Heart left ventricle (tissue), 16 donors: ENCODE measurements at regions of chr10 and their contacts with region 1.

Region 1: DNA sequence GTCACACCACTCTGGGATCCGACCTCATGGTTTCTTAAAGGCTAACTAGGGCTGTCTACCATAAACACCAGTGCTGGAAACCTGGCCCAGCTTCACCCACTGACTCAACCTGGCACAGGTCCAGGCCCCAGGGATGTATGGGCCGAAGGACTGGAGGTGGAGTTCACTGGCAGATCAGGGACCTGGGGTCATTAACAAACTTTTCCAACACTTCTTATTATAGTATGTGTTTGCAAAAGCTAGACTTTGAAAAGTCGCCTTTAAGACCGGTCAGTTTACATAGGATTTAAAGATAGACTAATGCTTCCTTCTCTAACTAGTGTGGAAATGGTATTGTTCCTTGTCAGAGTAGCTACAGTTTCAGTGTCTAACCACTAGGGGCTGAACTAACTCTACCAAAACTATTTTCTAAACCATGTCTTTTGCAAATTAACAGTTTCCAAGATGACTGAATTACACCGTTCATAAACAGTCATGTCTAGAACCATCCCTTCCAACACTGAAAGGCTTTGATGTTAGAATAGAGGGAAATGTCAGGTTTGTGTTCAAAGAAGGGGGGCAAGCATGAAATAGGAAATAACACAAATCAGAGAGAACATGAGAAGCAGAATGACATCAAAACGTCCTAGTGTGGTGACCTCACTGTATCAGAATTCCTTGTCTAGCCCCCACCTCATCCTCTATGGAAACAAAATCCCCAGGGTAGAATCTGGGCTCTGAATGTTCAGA is 29.7 kb downstream of the STN1 start:
- DNase-seq: peak; percentile 62 to 87 (median 71)
- ATAC-seq: peak; percentile 55 to 78 (median 68)
- H3K4me3 ChIP-seq: no peak overlapping the region
- H3K27ac ChIP-seq: peak overlapping the region in 9 of 12 donors; percentile 17 to 65 (median 54)
- H3K4me1 ChIP-seq: peaks cover 0 to 42% (median 26%) of the 10 kb centered on the region in 12 donors
- H3K27me3 ChIP-seq: no peaks in the 10 kb centered on the region
- CTCF ChIP-seq: peak; percentile 69 to 92 (median 84)
- POLR2A ChIP-seq: no peak

Region 2: DNA sequence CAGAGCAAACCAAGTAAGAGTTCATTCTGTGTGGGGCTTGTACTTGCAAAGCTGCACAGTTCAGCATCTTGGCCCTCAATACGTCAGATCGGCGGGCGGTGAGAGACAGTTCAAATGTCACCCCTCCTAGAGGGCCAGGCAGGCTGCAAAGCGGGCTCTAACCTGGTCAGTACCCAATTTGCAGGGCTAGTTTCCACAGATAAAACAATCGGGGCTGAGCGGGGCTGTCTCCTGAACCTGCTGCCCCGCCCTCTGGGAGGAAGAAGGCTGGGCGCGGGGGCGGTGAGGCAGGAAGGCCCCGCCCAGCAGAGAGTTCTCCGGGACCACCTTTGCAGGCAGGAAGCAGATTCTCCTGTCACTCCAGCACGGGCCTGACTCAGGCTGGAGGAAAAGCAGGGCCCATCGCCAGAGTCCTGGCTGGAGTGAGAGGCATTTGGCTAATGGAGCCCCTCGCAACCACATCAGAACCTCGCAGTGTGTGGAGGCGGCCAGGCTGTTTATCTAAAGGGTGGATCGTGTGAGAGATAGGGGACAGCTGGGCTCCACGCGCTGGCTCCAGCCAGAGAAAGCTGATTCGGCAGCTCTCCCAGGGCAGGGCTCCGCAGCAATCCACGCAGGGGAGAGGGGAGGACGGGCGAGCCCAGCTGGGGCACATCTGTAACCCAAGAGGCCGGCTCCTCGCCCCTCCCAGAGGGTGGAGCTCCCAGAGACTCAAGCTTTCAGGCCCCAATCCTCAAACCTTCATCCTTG is 116.0 kb before region 1 on chr10:
- intact Hi-C with region 1: no loop called
- DNase-seq: peak; percentile 86 to 92 (median 89)
- ATAC-seq: peak; percentile 83 to 93 (median 90)
- H3K4me3 ChIP-seq: peak overlapping the region in 10 of 12 donors; percentile 22 to 59 (median 44)
- H3K27ac ChIP-seq: peak overlapping the region; percentile 56 to 89 (median 78)
- H3K4me1 ChIP-seq: peaks cover 0 to 40% (median 18%) of the 10 kb centered on the region in 12 donors
- H3K27me3 ChIP-seq: no peaks in the 10 kb centered on the region
- CTCF ChIP-seq: no peak
- POLR2A ChIP-seq: peak in 1 of 2 donors; percentile 23

Region 3: GRCh38 chr10:103820101-103821062 is 67.9 kb before region 1 on chr10:
- intact Hi-C with region 1: no loop called
- DNase-seq: peak; percentile 83 to 91 (median 86)
- ATAC-seq: peak; percentile 60 to 91 (median 81)
- H3K4me3 ChIP-seq: peak overlapping the region in 4 of 12 donors; percentile 2 to 26 (median 10)
- H3K27ac ChIP-seq: peak overlapping the region in 9 of 12 donors; percentile 2 to 60 (median 54)
- H3K4me1 ChIP-seq: peaks cover 0 to 68% (median 38%) of the 10 kb centered on the region in 12 donors
- H3K27me3 ChIP-seq: no peaks in the 10 kb centered on the region
- CTCF ChIP-seq: no peak
- POLR2A ChIP-seq: no peak

Region 4: GRCh38 chr10:103918053-103918846 is 30.0 kb after region 1 on chr10 and contains the start of gene STN1:
- intact Hi-C with region 1: loop called in 1 of 10 experiments (anchors 1 kb)
- DNase-seq: peak; percentile 98 to 99 (median 99)
- ATAC-seq: peak; percentile 98
- H3K4me3 ChIP-seq: peak within 1 kb of the TSS; percentile 27 to 97 (median 74)
- H3K27ac ChIP-seq: peak within 1 kb of the TSS; percentile 90 to 100 (median 96)
- H3K4me1 ChIP-seq: peaks cover 0 to 44% (median 29%) of the 10 kb centered on the region in 12 donors
- H3K27me3 ChIP-seq: no peaks in the 10 kb centered on the region
- CTCF ChIP-seq: peak in 4 of 12 donors; percentile 11 to 19 (median 14)
- POLR2A ChIP-seq: peak; percentile 85 to 97
- total RNA-seq, gene STN1: 28.6 to 53.1 (median 32.7) TPM

Region 5: DNA sequence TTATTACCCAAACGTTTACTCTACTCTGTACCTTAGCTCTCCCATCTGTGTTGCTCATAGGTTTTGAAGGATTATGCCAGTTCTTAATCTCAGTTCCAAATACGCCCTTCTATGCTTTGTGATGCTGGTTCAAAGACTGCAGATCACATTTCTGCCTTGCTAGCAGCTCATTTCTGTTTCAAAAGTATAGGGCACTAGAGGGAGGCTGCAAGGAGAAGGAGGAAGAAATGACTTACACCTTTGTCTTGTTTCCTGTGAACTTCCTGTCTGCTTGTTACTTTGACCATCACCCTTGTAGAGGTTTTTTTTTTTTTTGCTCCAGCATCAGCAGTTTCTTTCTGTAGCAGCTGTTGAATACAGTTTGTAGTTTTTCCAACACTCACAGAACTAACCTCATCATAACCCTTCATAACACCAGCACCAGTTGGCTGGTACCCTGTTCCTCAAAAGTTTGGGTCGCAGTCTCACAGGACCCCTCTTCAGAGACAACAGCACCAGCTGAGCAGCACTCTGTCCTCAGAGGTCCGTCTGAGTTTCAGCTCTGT is 95.2 kb after region 1 on chr10:
- intact Hi-C with region 1: loop called in 3 of 10 experiments (anchors 5 kb)
- DNase-seq: no peak
- ATAC-seq: peak in 1 of 4 donors; percentile 23
- H3K4me3 ChIP-seq: no peak overlapping the region
- H3K27ac ChIP-seq: peak overlapping the region in 2 of 12 donors; percentile 20 to 70
- H3K4me1 ChIP-seq: peaks cover 0 to 64% (median 31%) of the 10 kb centered on the region in 12 donors
- H3K27me3 ChIP-seq: no peaks in the 10 kb centered on the region
- CTCF ChIP-seq: no peak
- POLR2A ChIP-seq: no peak

Region 6: DNA sequence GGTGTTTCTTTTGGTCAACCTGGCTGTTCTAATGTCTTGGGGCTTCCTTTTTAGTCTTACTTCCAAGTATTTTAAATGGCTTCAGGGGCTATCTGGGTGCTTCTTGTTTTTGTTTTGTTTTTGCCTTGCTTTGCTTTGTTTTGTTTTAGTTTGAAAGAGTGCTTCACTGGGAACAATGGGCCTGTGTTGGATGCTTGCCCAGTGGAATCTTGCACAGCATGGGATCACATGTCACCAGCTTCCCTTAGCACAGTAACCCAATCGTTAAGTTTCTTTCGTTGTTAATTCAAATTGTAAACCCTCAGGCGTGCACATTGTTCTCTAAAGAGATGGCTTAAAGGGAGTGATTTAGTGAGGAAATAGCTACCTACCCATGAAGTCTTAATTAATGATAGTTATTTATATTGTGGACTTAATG is 188.5 kb after region 1 on chr10:
- intact Hi-C with region 1: loop called in 1 of 10 experiments (anchors 5 kb)
- DNase-seq: peak in 4 of 5 donors; percentile 67 to 81 (median 70)
- ATAC-seq: peak; percentile 67 to 96 (median 80)
- H3K4me3 ChIP-seq: no peak overlapping the region
- H3K27ac ChIP-seq: peak overlapping the region in 8 of 12 donors; percentile 27 to 71 (median 46)
- H3K4me1 ChIP-seq: peaks cover 0 to 19% (median 7%) of the 10 kb centered on the region in 12 donors
- H3K27me3 ChIP-seq: no peaks in the 10 kb centered on the region
- CTCF ChIP-seq: no peak
- POLR2A ChIP-seq: no peak

Region 7: GRCh38 chr10:104209575-104210198 is 321.4 kb after region 1 on chr10:
- intact Hi-C with region 1: loop called (anchors 2 to 10 kb)
- DNase-seq: peak in 2 of 5 donors; percentile 20 to 33
- ATAC-seq: peak in 3 of 4 donors; percentile 49 to 71 (median 68)
- H3K4me3 ChIP-seq: no peak overlapping the region
- H3K27ac ChIP-seq: no peak overlapping the region
- H3K4me1 ChIP-seq: peaks cover 0 to 4% (median 0%) of the 10 kb centered on the region in 12 donors
- H3K27me3 ChIP-seq: no peaks in the 10 kb centered on the region
- CTCF ChIP-seq: peak; percentile 30 to 70 (median 52)
- POLR2A ChIP-seq: no peak